Sigmoid colon (tissue), 7 donors: ENCODE measurements at regions of chr3 and their contacts with region 1.

Region 1: GRCh38 chr3:185767002-185767688 is 57.7 kb downstream of the IGF2BP2 start:
- DNase-seq: no peak
- H3K4me3 ChIP-seq: no peak overlapping the region
- H3K27ac ChIP-seq: no peak overlapping the region
- H3K4me1 ChIP-seq: peaks cover 0 to 24% (median 7%) of the 10 kb centered on the region in 4 donors
- H3K27me3 ChIP-seq: no peaks in the 10 kb centered on the region
- CTCF ChIP-seq: no peak
- EP300 ChIP-seq: no peak
- POLR2A ChIP-seq: no peak

Region 2: GRCh38 chr3:185659942-185660921 is 106.9 kb before region 1 on chr3:
- intact Hi-C with region 1: loop called (anchors 5 kb)
- DNase-seq: peak; percentile 82
- H3K4me3 ChIP-seq: no peak overlapping the region
- H3K27ac ChIP-seq: peak overlapping the region; percentile 29 to 86 (median 52)
- H3K4me1 ChIP-seq: peaks cover 0 to 56% (median 44%) of the 10 kb centered on the region in 4 donors
- H3K27me3 ChIP-seq: no peaks in the 10 kb centered on the region
- CTCF ChIP-seq: peak; percentile 43 to 97 (median 86)
- EP300 ChIP-seq: no peak
- POLR2A ChIP-seq: no peak

Region 3: DNA sequence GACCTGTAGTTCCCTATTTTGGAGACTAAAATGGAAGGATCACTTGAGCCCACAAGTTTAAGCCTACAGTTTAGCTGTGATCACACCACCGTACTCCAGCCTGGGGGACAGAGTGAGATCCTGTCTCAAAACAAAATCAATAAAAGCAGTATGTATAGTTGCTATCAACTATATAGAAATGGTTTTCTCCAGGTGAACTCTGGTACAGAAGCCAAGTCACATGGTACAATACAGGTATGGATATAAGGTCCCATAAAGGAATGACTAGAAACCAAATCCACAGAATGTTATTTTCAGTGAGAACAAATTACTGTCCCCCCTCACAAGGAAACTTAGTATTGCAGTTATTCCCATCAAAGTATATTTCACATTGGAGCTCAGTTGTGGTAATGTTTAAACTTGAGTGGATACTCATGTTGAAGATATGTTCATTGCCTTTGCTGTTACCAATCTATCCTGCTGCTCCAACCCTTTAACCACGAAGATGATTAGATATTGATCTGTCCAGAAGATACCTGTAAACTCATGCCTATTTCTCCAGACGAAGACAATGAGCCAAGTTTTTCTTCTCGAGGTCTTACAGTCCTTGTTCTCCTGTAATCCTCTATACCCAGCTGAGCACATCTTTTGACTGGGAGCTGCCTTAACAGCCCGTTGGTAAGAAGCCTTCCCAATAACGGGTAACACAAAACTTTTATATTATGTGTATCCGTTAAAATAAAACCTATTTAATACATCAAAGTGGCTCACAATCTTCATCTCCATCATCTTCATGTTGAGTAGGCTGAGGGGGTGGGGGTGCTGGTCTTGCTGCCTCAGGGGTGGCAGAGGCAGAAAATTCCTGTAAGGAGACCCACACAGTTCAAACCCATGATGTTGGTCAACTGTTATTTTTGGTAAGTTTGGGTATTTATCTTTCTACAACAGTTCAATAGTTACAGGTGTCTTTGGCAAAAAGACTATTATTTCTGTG is 146.1 kb after region 1 on chr3:
- intact Hi-C with region 1: no loop called
- DNase-seq: no peak
- H3K4me3 ChIP-seq: no peak overlapping the region
- H3K27ac ChIP-seq: no peak overlapping the region
- H3K4me1 ChIP-seq: no peaks in the 10 kb centered on the region
- H3K27me3 ChIP-seq: no peaks in the 10 kb centered on the region
- CTCF ChIP-seq: no peak
- EP300 ChIP-seq: no peak
- POLR2A ChIP-seq: no peak